GM12878 (cell line): ENCODE measurements at regions of chr3 and their contacts with region 1.

Region 1: DNA sequence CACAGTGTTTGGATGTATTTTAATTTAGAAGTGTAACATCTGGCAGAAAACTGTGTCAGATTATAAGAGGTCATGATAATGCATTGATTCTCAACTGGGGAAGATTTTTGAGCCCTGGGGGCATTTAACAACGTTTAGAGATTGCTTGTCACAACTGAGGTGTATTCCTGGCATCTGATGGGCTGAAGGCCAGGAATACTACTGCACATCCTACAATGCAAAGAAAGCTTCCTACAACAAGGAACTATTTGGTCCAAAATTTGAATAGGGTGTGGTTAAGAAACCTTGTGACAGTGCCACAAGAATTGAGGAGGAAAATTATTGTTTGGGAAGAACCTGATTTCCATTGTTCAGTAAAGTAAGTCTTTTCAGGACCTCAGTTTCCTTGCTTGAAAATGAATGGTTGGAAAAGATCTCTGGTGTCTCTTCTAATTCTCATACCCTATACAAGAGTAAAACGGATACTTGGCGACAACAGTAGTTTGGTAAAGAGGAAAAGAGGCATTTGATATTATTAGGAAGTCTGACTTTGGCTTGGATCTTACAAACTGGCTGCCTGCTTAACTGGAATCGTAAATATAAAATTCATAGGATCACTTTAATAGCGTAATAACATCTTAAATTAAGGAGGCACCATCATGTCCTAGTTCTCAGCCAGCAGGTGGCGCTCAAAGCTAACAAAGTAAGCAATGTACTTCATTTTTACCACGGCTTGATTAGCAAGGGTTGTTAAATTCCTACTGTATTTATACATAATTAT is 4.3 kb downstream of the DAZL start:
- DNase-seq: no peak
- ATAC-seq: peak; percentile 86
- H3K4me3 ChIP-seq: no peak overlapping the region
- H3K27ac ChIP-seq: no peak overlapping the region
- H3K4me1 ChIP-seq: peaks cover 7% of the 10 kb centered on the region
- H3K27me3 ChIP-seq: no peaks in the 10 kb centered on the region
- CTCF ChIP-seq: peak; percentile 56 to 81 (median 69)
- EP300 ChIP-seq: no peak
- POLR2A ChIP-seq: no peak
- RAD21 ChIP-seq: peak; percentile 96

Region 2: GRCh38 chr3:16545413-16546185 is 55.4 kb before region 1 on chr3:
- CTCF ChIA-PET with region 1: no interaction called
- POLR2A ChIA-PET with region 1: no interaction called
- RAD21 ChIA-PET with region 1: no interaction called
- SMC1A ChIA-PET with region 1: no interaction called
- in situ Hi-C with region 1: no loop called
- intact Hi-C with region 1: no loop called
- DNase-seq: no peak
- ATAC-seq: no peak
- H3K4me3 ChIP-seq: no peak overlapping the region
- H3K27ac ChIP-seq: no peak overlapping the region
- H3K4me1 ChIP-seq: peaks cover 9% of the 10 kb centered on the region
- H3K27me3 ChIP-seq: no peaks in the 10 kb centered on the region
- CTCF ChIP-seq: no peak
- EP300 ChIP-seq: no peak
- POLR2A ChIP-seq: no peak
- RAD21 ChIP-seq: no peak

Region 3: GRCh38 chr3:16589867-16590624 is 10.9 kb before region 1 on chr3:
- CTCF ChIA-PET with region 1: interaction called, 14 read pairs
- POLR2A ChIA-PET with region 1: no interaction called
- RAD21 ChIA-PET with region 1: interaction called, 3 read pairs
- SMC1A ChIA-PET with region 1: interaction called, 15 read pairs
- in situ Hi-C with region 1: no loop called
- intact Hi-C with region 1: no loop called
- DNase-seq: peak; percentile 64
- ATAC-seq: peak; percentile 99
- H3K4me3 ChIP-seq: no peak overlapping the region
- H3K27ac ChIP-seq: peak overlapping the region; percentile 13; the same call in 1 of the 2 replicates
- H3K4me1 ChIP-seq: peaks cover 11% of the 10 kb centered on the region
- H3K27me3 ChIP-seq: no peaks in the 10 kb centered on the region
- CTCF ChIP-seq: no peak
- EP300 ChIP-seq: peak; percentile 75 to 88; a peak in 3 of 4 replicates
- POLR2A ChIP-seq: no peak
- RAD21 ChIP-seq: no peak

Region 4: DNA sequence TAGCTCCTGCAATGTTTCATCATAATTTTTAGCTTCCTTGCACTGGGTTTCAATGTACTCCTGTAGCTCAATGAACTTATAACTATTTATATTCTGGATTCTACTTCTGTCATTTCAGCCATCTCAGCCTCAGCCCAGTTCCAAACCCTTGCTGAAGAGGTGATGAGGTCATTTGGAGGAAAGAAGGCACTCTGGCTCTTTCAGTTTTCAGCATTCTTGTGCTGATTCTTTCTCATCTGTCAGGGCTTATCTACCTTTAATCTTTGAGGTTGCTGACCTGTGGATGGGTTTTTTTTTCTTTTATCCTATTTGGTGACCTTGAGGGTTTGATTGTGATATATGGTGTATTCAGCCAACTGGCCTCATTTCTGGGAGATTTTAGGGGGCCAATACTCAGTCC is 113.4 kb after region 1 on chr3:
- CTCF ChIA-PET with region 1: no interaction called
- POLR2A ChIA-PET with region 1: no interaction called
- RAD21 ChIA-PET with region 1: no interaction called
- SMC1A ChIA-PET with region 1: no interaction called
- in situ Hi-C with region 1: no loop called
- intact Hi-C with region 1: no loop called
- DNase-seq: no peak
- ATAC-seq: no peak
- H3K4me3 ChIP-seq: no peak overlapping the region
- H3K27ac ChIP-seq: no peak overlapping the region
- H3K4me1 ChIP-seq: no peaks in the 10 kb centered on the region
- H3K27me3 ChIP-seq: no peaks in the 10 kb centered on the region
- CTCF ChIP-seq: no peak
- EP300 ChIP-seq: no peak
- POLR2A ChIP-seq: no peak
- RAD21 ChIP-seq: no peak

Region 5: DNA sequence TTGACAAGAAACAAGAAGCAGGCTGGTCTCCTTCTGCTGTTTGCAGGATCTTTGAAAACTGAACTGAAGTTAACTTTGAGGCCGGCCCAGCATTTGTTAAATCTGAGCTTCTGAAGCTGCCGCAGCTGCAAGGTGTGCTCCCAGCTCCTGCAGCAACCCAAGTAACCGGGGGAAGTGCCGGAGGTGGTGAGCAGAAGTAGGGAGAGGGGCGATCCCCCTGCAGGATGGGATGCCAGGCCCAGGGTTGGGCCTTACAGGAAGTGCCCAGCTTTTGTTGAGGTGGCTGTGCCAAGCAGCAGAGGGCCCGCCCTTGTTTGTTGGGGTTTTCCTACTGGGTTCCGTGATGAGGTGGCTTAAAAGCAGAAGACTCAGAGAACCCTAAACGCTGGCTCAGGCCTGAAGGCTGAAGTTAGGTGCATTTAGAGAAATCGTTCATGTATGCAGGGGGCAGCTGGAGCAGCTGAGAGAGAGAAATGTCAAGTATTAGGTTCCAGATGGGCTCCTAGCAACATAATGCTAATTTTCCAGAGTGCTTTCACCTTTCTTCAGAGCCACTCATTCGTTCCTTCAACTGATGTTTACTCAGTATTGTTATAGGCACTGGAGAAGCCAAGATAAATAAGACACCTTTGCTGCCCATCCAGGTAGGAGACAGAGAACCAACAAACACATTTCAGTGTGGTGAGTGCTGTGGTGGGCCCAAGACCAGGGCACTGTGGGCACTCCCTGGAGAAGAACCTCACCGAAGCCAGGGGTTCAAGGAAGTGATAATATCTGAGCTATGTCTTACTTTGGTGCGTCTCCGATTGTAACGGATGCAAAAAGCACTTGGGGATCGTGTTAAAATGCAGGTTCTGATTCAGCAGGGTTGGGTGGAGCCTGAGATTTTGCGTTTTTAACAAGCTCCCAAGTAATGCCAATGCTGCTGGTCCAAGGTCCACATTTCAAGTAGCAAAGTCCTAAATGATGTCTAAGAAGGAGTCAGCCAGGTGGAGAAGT is 241.6 kb after region 1 on chr3:
- CTCF ChIA-PET with region 1: no interaction called
- POLR2A ChIA-PET with region 1: no interaction called
- RAD21 ChIA-PET with region 1: interaction called, 3 read pairs
- SMC1A ChIA-PET with region 1: no interaction called
- in situ Hi-C with region 1: no loop called
- intact Hi-C with region 1: loop called (anchors 5 kb)
- DNase-seq: peak; percentile 83
- ATAC-seq: peak; percentile 93
- H3K4me3 ChIP-seq: peak overlapping the region; percentile 36
- H3K27ac ChIP-seq: peak overlapping the region; percentile 77
- H3K4me1 ChIP-seq: peaks cover 45% of the 10 kb centered on the region
- H3K27me3 ChIP-seq: no peaks in the 10 kb centered on the region
- CTCF ChIP-seq: no peak
- EP300 ChIP-seq: peak in 1 of 2 experiments; percentile 16; a peak in 1 of 4 replicates
- POLR2A ChIP-seq: peak; percentile 58
- RAD21 ChIP-seq: no peak

Region 6: GRCh38 chr3:17140670-17141505 is 539.9 kb after region 1 on chr3:
- CTCF ChIA-PET with region 1: interaction called, 4 read pairs
- POLR2A ChIA-PET with region 1: no interaction called
- RAD21 ChIA-PET with region 1: no interaction called
- SMC1A ChIA-PET with region 1: no interaction called
- in situ Hi-C with region 1: no loop called
- intact Hi-C with region 1: loop called (anchors 5 kb)
- DNase-seq: no peak
- ATAC-seq: peak; percentile 71
- H3K4me3 ChIP-seq: no peak overlapping the region
- H3K27ac ChIP-seq: no peak overlapping the region
- H3K4me1 ChIP-seq: peaks cover 12% of the 10 kb centered on the region
- H3K27me3 ChIP-seq: no peaks in the 10 kb centered on the region
- CTCF ChIP-seq: peak; percentile 20 to 46 (median 45); a peak in 4 of 6 replicates
- EP300 ChIP-seq: no peak
- POLR2A ChIP-seq: no peak
- RAD21 ChIP-seq: peak; percentile 55

Region 7: GRCh38 chr3:17412950-17413530 is 812.1 kb after region 1 on chr3:
- CTCF ChIA-PET with region 1: interaction called, 25 read pairs
- POLR2A ChIA-PET with region 1: no interaction called
- RAD21 ChIA-PET with region 1: interaction called, 10 read pairs
- SMC1A ChIA-PET with region 1: interaction called, 8 read pairs
- in situ Hi-C with region 1: loop called (anchors 10 kb)
- intact Hi-C with region 1: loop called (anchors 2 kb)
- DNase-seq: peak; percentile 41
- ATAC-seq: peak; percentile 98
- H3K4me3 ChIP-seq: no peak overlapping the region
- H3K27ac ChIP-seq: no peak overlapping the region
- H3K4me1 ChIP-seq: no peaks in the 10 kb centered on the region
- H3K27me3 ChIP-seq: no peaks in the 10 kb centered on the region
- CTCF ChIP-seq: peak; percentile 70 to 80 (median 70)
- EP300 ChIP-seq: no peak
- POLR2A ChIP-seq: no peak
- RAD21 ChIP-seq: peak; percentile 93